ENCODE measurements at regions of chr16 and their contacts with region 1.

Region 1: DNA sequence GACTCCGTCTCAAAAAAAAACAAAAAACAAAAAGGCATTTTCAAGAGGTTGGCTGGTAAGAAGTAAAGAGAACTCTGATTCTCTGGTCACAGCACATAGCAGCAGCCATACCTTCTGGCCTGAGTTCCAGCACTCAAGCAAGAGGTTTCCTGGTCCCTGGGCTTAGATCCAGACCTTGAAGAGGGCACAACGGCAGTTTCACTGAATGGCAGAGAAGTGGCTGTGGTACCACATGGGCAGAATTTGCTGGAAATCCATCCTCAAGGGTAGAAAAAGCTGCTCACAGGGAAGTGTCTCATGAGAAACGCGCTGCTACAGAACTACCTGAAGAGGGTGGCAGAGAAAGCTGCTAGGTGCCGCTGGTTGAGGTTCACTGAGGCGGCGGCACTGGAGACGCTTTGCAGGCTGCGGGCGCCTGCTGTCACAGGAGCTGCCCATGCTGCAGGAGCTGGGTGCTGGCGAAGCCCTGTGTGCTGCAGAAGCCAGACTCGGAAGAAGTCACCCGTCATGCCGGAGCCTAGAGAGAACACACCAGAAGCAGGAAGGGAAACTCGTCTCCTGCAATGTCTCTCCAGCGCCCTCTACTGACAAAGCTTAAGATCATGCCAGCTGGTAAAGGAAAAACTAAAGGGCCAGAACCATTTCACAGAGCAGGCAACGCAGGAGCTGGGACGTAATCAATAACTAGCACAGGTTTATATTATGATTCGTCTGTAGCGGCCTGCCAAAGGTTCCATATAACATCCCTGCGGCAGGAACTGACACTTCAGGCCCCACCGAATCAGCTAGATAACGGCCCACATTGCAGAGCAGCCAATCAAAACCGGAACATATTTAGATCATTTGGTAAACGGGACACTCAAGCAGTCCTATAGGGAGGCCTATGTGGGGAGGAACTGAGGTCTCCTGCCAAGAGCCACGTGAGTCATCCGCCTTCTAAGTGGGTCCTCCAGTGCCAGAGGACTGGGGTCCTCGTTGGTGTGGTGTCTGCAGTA is 5.4 kb upstream of the ZNF213 start:
- DNase-seq: peak in 1 of 2 experiments; percentile 87
- ATAC-seq: peak; percentile 70
- H3K4me3 ChIP-seq: peak overlapping the region; percentile 34
- H3K27ac ChIP-seq: peak overlapping the region; percentile 55 to 86
- H3K4me1 ChIP-seq: peaks cover 18% of the 10 kb centered on the region; the same call in 2 of the 3 replicates
- CTCF ChIP-seq: peak; percentile 93
- EP300 ChIP-seq: no peak
- POLR2A ChIP-seq: peak; percentile 11; the same call in 1 of the 2 replicates
- RAD21 ChIP-seq: peak; percentile 59 to 69; a peak in 4 of 5 replicates

Region 2: GRCh38 chr16:2398520-2398919 is 730.9 kb before region 1 on chr16:
- CTCF ChIA-PET with region 1: no interaction called
- POLR2A ChIA-PET with region 1: no interaction called
- DNase-seq: no peak
- ATAC-seq: no peak
- H3K4me3 ChIP-seq: no peak overlapping the region
- H3K27ac ChIP-seq: no peak overlapping the region
- H3K4me1 ChIP-seq: no peaks in the 10 kb centered on the region
- CTCF ChIP-seq: no peak
- EP300 ChIP-seq: no peak
- POLR2A ChIP-seq: no peak
- RAD21 ChIP-seq: no peak

Region 3: DNA sequence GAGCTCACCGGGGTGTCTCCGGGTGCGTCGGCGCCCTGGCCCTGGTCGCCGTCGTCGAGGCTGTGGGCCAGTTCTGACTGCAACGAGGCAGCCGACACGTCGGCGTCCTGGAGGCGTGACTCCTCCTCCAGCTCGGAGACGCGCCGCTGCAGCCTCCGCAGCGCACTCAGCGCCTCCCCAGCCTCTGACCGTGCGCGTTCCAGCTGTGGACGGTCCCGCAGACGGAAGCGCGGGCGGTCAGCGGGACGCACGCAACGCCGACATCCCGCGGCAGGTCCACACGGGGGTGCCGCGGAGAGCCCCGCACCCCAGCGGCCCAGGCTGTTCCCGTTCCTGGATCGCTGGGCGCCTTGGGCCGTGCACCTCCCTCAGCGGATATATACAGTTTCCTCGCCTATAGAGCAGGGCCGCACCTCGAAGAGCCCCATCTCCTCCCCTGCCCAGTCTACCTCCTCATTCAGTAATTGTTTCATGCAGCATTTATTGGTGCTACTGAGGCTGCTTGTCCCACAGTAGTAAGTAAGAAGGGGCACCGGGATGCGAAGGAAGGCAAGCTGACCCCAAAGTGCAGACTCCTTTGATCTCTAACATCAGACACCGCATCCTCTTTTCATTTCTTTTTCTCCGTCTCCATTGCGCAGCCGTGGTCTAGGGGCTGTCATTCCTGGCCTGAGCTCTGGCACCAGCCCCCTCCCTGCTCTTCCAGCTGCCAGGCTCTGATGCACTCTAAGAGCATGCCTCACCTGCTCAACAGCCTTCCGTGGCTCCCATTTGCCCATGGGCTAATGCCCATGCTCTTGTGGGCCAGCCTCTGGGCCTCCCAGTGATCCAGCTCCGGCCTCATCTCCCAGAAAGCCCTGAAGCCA is 99.7 kb before region 1 on chr16:
- CTCF ChIA-PET with region 1: interaction called, 40 read pairs
- POLR2A ChIA-PET with region 1: interaction called, 4 read pairs
- DNase-seq: no peak
- ATAC-seq: no peak
- H3K4me3 ChIP-seq: no peak overlapping the region
- H3K27ac ChIP-seq: no peak overlapping the region
- H3K4me1 ChIP-seq: peaks cover 14% of the 10 kb centered on the region
- CTCF ChIP-seq: no peak
- EP300 ChIP-seq: no peak
- POLR2A ChIP-seq: no peak
- RAD21 ChIP-seq: no peak

Region 4: DNA sequence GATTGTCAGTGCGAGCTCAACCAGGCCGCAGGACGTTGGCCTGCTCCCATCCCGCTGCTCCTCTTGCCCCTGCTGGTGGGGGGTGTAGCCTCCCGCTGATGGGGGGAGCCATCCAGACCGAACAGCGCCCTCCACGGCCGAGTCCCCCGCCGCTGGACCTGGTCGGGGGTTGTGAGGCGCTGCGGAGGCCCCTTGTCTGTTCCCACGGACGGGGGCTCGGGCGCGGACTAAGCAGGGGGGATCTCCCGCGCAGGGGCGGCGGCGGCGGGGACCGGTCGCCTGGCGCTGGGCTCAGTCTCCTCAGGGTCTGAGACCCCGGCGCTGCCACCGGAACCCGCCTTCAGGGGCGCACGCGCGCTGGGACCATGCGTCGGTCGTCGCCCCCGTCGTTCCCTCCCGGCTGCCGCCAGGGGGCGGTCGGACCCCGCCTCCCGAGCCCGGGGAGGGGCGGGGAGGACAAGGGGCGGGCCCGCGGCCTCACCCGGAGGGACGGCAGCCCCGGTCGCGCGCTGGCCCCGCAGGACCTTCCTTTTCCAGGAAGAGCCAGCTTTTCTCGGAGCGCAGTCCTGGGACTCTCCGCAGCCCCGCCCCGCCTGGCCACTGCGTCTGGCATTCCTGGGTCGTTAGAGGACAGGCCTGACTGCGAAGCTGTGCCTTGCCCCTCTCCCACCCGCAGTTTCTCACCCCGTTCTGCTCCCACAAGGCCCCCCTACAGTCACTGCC is 70.3 kb before region 1 on chr16:
- CTCF ChIA-PET with region 1: interaction called, 186 read pairs
- POLR2A ChIA-PET with region 1: interaction called, 15 read pairs
- DNase-seq: peak; percentile 79 to 84
- ATAC-seq: peak; percentile 89 to 95
- H3K4me3 ChIP-seq: peak overlapping the region; percentile 76
- H3K27ac ChIP-seq: peak overlapping the region; percentile 94 to 99
- H3K4me1 ChIP-seq: peaks cover 10% of the 10 kb centered on the region
- CTCF ChIP-seq: peak; percentile 82
- EP300 ChIP-seq: no peak
- POLR2A ChIP-seq: peak; percentile 53
- RAD21 ChIP-seq: peak; percentile 74 to 94

Region 5: DNA sequence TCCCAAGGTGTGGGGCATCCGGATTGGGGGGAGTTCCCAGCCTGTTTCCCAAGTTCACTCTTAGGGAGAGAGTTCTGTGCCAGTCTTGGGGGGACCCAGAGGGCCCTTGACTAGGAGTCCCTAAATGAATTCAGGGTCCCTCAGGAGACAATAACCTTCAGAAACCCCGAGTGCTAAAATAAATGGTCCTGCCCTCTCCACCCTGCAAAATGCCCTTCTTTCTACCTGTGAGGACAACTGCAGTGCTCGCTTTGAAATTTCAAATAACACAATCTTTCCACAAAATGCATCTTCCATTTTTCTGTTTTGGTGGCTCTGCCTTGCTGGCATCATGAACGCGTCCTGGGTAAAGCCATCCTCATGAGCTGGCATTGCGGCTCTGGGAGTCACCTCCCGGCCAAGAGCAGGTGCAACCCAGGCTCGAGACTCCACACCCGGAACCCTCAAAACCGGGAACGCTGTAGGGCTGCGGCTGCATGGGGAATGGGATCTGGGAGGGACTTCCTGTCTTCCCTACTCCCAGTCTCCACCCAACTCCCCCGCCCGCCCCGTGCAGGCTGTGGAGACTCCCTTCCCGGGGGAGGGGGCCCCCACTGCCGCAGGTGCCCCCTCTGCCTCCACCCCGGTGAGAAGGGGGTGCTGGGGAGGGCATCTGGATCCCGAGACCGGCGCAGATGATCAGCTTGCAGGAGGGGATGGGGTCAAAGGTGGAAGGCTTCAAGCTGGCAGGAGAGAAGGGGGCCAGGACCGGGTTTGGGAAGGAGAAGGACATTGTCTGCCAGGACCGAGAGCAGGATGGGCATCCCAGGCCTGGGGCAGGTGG is 17.2 kb before region 1 on chr16 and contains the start of gene ZNF205:
- CTCF ChIA-PET with region 1: interaction called, 46 read pairs
- POLR2A ChIA-PET with region 1: interaction called, 10 read pairs
- DNase-seq: peak; percentile 85 to 94
- ATAC-seq: peak; percentile 95 to 98
- H3K4me3 ChIP-seq: peak within 1 kb of the TSS; percentile 84
- H3K27ac ChIP-seq: peak within 1 kb of the TSS; percentile 90 to 96
- H3K4me1 ChIP-seq: peaks cover 18% of the 10 kb centered on the region
- CTCF ChIP-seq: no peak
- EP300 ChIP-seq: no peak
- POLR2A ChIP-seq: peak; percentile 39; the same call in 1 of the 2 replicates
- RAD21 ChIP-seq: no peak
- polyA plus RNA-seq, gene ZNF205: 3.1 and 4.3 TPM in 2 replicates

Region 6: GRCh38 chr16:3143612-3144320 is 14.3 kb after region 1 on chr16:
- CTCF ChIA-PET with region 1: interaction called, 158 read pairs
- POLR2A ChIA-PET with region 1: interaction called, 64 read pairs
- DNase-seq: no peak
- ATAC-seq: peak; percentile 6 to 14; a peak in 2 of 6 replicates
- H3K4me3 ChIP-seq: no peak overlapping the region
- H3K27ac ChIP-seq: no peak overlapping the region
- H3K4me1 ChIP-seq: no peaks in the 10 kb centered on the region
- CTCF ChIP-seq: no peak
- EP300 ChIP-seq: no peak
- POLR2A ChIP-seq: no peak
- RAD21 ChIP-seq: no peak

Region 7: DNA sequence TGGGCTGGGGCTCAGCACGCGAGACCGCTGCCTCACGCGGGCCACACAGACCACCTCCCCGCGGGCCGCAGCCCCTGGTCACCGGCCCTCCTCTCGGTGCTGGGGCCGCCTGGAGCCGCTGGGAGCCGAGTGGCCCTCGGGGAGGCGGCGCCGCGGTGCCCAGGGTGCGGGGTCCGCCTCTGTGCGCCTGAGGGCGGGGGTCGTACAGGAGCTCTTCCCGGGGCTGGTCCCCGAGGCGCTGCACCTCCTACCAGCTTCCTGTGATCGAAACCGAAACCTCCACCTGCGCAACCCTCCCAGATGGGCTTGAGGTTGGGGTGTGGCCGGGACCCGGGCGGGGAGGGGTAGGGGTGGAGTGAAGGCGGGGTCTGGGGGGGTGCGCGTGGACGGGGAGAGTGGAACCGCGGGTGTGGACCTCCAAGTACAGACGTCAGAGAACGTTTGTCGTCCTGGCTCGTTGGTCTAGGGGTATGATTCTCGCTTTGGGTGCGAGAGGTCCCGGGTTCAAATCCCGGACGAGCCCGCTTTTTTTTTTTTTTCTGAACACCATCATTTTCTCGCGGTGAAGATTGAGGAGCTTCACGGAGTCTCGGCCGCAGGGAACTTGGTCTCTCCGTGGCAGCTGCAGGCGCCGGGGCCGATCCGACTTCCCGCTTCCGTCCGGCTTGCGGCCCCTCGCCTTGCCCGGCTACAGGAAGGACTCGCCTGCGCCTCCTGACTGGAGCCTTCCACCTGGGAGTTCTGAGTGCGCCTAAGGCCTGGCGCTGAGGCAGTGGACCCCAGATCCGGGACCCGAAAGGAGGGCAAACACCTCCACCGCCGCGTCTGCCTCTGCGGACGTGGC is 29.3 kb after region 1 on chr16:
- CTCF ChIA-PET with region 1: interaction called, 36 read pairs
- POLR2A ChIA-PET with region 1: interaction called, 9 read pairs
- DNase-seq: peak; percentile 94 to 95
- ATAC-seq: peak; percentile 63 to 66
- H3K4me3 ChIP-seq: peak overlapping the region; percentile 95
- H3K27ac ChIP-seq: peak overlapping the region; percentile 89 to 96
- H3K4me1 ChIP-seq: no peaks in the 10 kb centered on the region
- CTCF ChIP-seq: no peak
- EP300 ChIP-seq: no peak
- POLR2A ChIP-seq: 0 out of 2 replicates have a peak, but pooled peaks have one; percentile 6
- RAD21 ChIP-seq: no peak

Region 8: DNA sequence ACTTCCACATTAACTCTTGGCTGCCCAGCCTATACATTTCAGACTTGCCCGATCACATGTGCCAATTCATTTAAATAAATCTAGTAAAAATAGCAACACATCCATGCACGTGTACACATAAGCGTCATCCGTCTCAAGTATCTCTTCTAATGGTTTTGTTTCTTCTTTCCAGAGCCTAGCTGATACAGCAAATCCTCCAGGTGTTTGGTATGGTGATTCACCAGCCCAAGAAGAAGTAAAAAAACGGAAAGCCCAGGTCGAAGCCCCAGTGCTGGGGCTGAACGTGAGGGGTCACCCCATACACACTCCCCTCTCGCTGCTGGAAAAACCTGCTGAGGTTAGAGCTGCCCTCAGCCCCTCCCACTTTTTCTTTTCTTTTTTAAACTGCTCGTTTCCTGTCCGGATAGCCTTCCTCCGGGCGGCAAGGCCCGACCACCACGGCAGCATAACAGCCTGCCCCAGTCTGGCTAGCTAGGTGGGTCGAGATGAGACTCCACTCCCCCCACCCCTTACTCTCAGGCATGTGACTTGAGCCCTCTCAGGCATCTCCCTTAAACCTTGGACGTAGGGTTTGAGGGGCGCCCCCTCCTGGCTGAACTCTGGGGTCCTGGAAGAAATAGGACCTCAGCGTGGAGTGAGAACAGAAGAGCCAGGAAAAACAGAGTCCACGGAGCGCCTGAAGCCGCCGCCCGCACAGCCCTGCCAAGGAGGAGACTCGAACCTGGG is 44.6 kb after region 1 on chr16:
- CTCF ChIA-PET with region 1: interaction called, 23 read pairs
- POLR2A ChIA-PET with region 1: interaction called, 3 read pairs
- DNase-seq: peak; percentile 76 to 85
- ATAC-seq: peak; percentile 32 to 36
- H3K4me3 ChIP-seq: peak overlapping the region; percentile 51
- H3K27ac ChIP-seq: peak overlapping the region; percentile 37 to 79; a peak in 5 of 6 replicates
- H3K4me1 ChIP-seq: peaks cover 20% of the 10 kb centered on the region; the same call in 2 of the 3 replicates
- CTCF ChIP-seq: peak; percentile 61
- EP300 ChIP-seq: no peak
- POLR2A ChIP-seq: no peak
- RAD21 ChIP-seq: peak in 1 of 2 experiments; percentile 22; a peak in 2 of 5 replicates